Activated B cell treated with CpG ODN at 0.5 μM for 24 hours (primary cell): ENCODE measurements at regions of chr13 and their contacts with region 1.

Region 1: DNA sequence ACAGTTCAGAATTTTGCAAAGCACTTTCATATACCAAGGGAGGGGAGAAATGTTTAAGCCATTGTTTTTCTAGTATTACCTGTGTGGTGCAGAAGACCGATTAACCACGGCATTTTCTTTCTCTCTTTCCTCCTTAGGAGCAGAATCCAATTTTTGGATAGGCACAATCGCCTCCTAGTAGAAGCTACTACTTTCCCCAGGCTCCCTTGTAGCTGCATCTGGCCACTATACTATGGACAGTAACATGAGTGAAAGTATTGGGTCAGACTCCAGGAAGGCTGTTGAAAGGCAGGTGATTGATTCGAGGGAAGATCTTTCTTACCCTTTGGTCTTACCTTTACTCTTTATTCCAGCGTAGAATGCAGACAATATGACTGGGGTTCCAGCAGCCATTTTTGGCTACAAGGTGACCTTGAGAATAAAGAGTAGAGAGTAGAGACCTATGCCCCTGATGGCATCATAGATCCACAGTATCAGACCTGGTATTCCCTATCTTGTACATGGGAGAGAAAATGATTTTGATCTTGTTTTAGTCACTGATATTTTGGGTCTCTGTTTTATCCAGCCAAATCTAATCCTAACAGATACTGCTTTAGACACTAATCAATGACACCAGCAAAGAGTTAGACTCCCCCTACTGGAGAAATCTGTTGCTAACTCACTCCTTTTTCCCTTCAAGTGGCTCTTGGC is 77.0 kb downstream of the LRRC63 start:
- DNase-seq: no peak
- ATAC-seq: peak; percentile 40
- H3K4me3 Mint-ChIP-seq: no peak overlapping the region
- H3K27ac Mint-ChIP-seq: no peak overlapping the region
- H3K4me1 Mint-ChIP-seq: no peaks in the 10 kb centered on the region
- H3K27me3 Mint-ChIP-seq: peaks cover 3% of the 10 kb centered on the region
- CTCF ChIP-seq: no peak

Region 2: DNA sequence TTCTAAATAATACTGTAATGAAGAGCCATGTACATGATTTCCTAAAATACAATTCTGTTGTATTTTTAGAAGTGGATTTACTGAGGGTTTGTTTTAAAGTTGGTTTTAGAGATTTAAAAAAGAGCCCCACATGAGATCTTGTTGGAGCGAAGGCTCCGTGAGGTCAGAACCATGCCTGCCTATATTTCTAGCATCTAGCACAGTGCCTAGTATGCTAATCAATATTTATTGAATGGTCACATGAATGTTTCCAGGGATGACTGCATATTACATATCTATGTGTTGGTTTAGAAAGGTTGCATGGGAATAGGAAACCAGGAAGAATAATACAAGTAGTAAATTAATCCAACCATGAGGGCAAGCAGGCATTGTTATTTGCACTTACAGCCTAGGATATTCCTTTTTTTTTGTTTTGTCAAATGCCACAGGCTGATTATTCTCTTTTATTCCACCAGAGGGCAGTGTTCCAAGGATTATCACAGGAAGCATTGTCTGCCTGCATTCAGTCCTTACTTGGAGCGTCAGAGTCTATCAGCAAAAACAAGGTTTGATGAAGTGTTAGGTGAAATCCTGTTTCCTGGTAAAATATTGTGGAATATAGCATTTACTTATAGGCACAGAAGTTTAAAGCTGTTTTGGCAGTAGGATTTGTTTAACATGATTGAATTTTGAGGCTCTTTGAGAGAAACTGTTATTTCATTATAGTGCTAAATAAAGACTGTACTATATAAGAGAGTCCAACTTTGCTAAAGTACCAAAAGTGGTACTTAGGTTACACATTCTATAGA is 777.2 kb before region 1 on chr13:
- CTCF ChIA-PET with region 1: interaction called, 3 read pairs
- POLR2A ChIA-PET with region 1: no interaction called
- intact Hi-C with region 1: loop called (anchors 1 kb)
- DNase-seq: no peak
- ATAC-seq: peak; percentile 58
- H3K4me3 Mint-ChIP-seq: no peak overlapping the region
- H3K27ac Mint-ChIP-seq: no peak overlapping the region
- H3K4me1 Mint-ChIP-seq: peaks cover 8% of the 10 kb centered on the region
- H3K27me3 Mint-ChIP-seq: no peaks in the 10 kb centered on the region
- CTCF ChIP-seq: peak; percentile 83

Region 3: GRCh38 chr13:45807520-45808099 is 481.1 kb before region 1 on chr13:
- CTCF ChIA-PET with region 1: interaction called, 7 read pairs
- POLR2A ChIA-PET with region 1: no interaction called
- intact Hi-C with region 1: loop called (anchors 1 kb)
- DNase-seq: no peak
- ATAC-seq: no peak
- H3K4me3 Mint-ChIP-seq: no peak overlapping the region
- H3K27ac Mint-ChIP-seq: no peak overlapping the region
- H3K4me1 Mint-ChIP-seq: no peaks in the 10 kb centered on the region
- H3K27me3 Mint-ChIP-seq: no peaks in the 10 kb centered on the region
- CTCF ChIP-seq: no peak

Region 4: DNA sequence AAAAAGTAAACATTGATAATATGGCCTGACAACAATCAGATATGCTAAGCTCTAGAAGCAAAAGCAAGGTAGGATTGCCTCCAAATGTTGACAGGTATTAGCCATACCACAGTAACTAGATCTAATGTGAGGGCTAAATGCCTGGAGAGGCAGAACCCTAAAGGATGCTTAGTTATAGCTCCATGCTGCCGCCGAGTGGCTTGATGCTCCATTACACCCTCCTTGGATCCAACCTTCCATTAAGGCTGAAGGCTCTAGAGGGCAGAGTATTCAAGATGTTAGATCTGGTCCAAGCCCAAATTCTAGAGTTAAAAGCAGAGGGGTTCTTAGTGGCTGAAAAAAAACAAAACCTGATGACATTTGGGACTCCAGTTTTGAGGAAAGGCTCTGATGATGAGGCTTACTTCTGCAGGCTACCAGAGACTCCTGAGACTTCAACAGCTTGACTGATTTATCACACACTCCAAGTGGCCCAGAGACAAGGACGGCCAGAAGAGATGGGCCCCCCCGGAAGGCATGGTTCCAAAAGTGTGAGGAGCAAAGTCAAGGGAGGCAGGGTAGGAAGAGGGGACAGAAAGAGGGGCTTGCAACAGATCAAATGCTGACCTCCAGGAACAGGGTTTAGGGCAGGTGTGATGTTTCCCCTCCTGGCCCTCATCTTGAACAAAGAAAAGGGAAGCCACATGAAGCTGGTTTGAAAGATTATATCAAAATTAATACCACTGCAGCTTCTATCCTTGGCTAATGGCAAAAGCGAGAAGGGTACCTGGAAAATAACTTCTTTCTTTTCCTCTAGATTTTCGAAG is 162.0 kb before region 1 on chr13:
- CTCF ChIA-PET with region 1: no interaction called
- POLR2A ChIA-PET with region 1: no interaction called
- intact Hi-C with region 1: loop called (anchors 2 kb)
- DNase-seq: peak; percentile 27
- ATAC-seq: peak; percentile 89
- H3K4me3 Mint-ChIP-seq: no peak overlapping the region
- H3K27ac Mint-ChIP-seq: peak overlapping the region; percentile 9
- H3K4me1 Mint-ChIP-seq: peaks cover 30% of the 10 kb centered on the region
- H3K27me3 Mint-ChIP-seq: no peaks in the 10 kb centered on the region
- CTCF ChIP-seq: no peak

Region 5: GRCh38 chr13:46232281-46232680 is 56.4 kb before region 1 on chr13:
- CTCF ChIA-PET with region 1: no interaction called
- POLR2A ChIA-PET with region 1: no interaction called
- intact Hi-C with region 1: no loop called
- DNase-seq: no peak
- ATAC-seq: no peak
- H3K4me3 Mint-ChIP-seq: no peak overlapping the region
- H3K27ac Mint-ChIP-seq: no peak overlapping the region
- H3K4me1 Mint-ChIP-seq: no peaks in the 10 kb centered on the region
- H3K27me3 Mint-ChIP-seq: peaks cover 7% of the 10 kb centered on the region
- CTCF ChIP-seq: no peak

Region 6: GRCh38 chr13:46278474-46278873 is 10.2 kb before region 1 on chr13:
- CTCF ChIA-PET with region 1: interaction called, 10 read pairs
- POLR2A ChIA-PET with region 1: no interaction called
- intact Hi-C with region 1: no loop called
- DNase-seq: no peak
- ATAC-seq: no peak
- H3K4me3 Mint-ChIP-seq: no peak overlapping the region
- H3K27ac Mint-ChIP-seq: no peak overlapping the region
- H3K4me1 Mint-ChIP-seq: no peaks in the 10 kb centered on the region
- H3K27me3 Mint-ChIP-seq: no peaks in the 10 kb centered on the region
- CTCF ChIP-seq: no peak

Region 7: DNA sequence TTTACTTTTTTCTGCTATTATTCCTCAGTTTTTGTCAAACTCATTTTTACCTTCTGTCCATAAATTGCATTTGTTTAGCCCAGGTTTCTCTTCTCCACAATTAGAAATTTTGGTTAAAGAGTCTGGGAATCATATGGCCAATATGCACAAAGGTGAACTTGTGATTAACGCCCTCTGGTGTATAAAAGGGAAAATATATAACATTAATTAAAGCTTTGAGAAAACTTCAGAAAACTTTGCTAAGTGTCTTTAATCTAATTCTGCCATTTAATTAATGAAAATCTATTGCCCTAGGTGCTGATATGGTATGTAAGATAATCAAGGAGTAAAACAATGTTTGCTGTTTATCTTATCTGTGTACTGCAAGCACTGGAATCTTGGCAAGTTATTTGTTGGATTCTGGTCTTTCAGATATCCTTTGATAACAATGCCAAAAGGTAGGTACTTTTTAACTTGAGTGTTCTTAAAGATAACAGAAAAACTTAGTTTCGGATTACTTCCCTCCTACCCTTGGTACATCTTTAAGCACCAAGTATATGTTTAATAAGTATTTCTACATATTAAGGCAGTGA is 1309.7 kb after region 1 on chr13:
- CTCF ChIA-PET with region 1: no interaction called
- POLR2A ChIA-PET with region 1: no interaction called
- intact Hi-C with region 1: no loop called
- DNase-seq: no peak
- ATAC-seq: no peak
- H3K4me3 Mint-ChIP-seq: no peak overlapping the region
- H3K27ac Mint-ChIP-seq: no peak overlapping the region
- H3K4me1 Mint-ChIP-seq: no peaks in the 10 kb centered on the region
- H3K27me3 Mint-ChIP-seq: no peaks in the 10 kb centered on the region
- CTCF ChIP-seq: no peak